HAP-1 (cell line): ENCODE measurements at regions of chr2 and their contacts with region 1.

Region 1: GRCh38 chr2:162007447-162008040 is 66.5 kb downstream of the DPP4 start:
- DNase-seq: no peak
- H3K4me3 ChIP-seq: no peak overlapping the region
- H3K4me1 ChIP-seq: peaks cover 6% of the 10 kb centered on the region
- H3K27me3 ChIP-seq: no peaks in the 10 kb centered on the region

Region 2: DNA sequence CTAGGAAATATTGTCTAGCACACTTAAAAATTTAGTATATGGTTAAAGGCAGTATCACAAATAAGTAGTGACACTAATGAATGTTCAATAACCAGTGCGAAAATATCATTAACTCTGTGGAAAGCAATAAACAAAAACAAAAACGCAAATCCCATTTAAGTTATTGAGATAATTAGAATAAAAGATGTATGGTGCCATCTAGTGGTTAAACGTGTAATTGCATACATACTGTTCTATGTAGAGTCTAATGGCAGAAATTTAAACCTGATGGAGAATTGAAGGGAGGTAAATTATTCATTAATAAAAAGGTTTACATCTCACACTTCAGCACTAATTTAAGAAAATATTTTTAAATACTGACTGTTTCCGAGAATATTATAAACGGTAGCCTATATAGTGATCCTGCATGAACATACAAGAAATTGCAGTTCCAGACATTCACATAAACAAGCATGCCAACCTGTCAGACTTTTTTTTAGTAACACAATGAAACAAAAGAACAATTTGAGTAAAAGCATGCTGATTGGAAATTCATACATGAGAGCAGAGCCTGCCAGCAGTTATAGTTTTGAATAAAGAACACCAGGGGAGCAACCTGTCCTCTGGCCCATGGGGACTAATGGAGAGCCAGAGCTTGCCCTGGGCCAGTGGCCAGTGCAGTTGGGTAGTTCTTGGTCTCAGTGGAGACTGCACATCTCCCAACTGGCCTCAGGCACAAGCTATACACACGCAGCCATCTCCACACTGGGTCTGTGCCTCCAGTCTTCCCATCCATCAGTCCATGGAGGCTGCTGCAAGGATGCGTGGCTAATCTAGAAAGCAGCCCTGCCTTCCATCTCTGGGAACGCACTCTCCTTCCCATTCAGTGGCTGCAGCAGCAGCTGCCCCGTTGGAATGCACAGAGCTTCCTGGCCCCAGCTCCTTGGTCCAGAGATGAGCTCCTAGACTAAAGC is 116.5 kb after region 1 on chr2:
- in situ Hi-C with region 1: loop called (anchors 25 kb)
- DNase-seq: peak in 1 of 2 experiments; percentile 43
- H3K4me3 ChIP-seq: no peak overlapping the region
- H3K4me1 ChIP-seq: no peaks in the 10 kb centered on the region
- H3K27me3 ChIP-seq: no peaks in the 10 kb centered on the region

Region 3: GRCh38 chr2:162579986-162580385 is 572.4 kb after region 1 on chr2:
- in situ Hi-C with region 1: no loop called
- DNase-seq: no peak
- H3K4me3 ChIP-seq: no peak overlapping the region
- H3K4me1 ChIP-seq: no peaks in the 10 kb centered on the region
- H3K27me3 ChIP-seq: no peaks in the 10 kb centered on the region